ENCODE measurements at regions of chr3 and their contacts with region 1.

Region 1: GRCh38 chr3:43296565-43296964 is 10.2 kb downstream of the SNRK start:
- DNase-seq: peak; percentile 22 to 92 (median 68)
- ATAC-seq: peak; percentile 88
- H3K4me3 ChIP-seq: peak overlapping the region; percentile 30 to 45
- H3K4me3 Mint-ChIP-seq: peak overlapping the region; percentile 87
- H3K27ac ChIP-seq: peak overlapping the region; percentile 57 to 87
- H3K27ac Mint-ChIP-seq: peak overlapping the region; percentile 96
- H3K4me1 ChIP-seq: peaks cover 89% of the 10 kb centered on the region
- H3K4me1 Mint-ChIP-seq: peaks cover 85% of the 10 kb centered on the region
- H3K27me3 ChIP-seq: no peaks in the 10 kb centered on the region
- H3K27me3 Mint-ChIP-seq: no peaks in the 10 kb centered on the region
- CTCF ChIP-seq: no peak

Region 2: DNA sequence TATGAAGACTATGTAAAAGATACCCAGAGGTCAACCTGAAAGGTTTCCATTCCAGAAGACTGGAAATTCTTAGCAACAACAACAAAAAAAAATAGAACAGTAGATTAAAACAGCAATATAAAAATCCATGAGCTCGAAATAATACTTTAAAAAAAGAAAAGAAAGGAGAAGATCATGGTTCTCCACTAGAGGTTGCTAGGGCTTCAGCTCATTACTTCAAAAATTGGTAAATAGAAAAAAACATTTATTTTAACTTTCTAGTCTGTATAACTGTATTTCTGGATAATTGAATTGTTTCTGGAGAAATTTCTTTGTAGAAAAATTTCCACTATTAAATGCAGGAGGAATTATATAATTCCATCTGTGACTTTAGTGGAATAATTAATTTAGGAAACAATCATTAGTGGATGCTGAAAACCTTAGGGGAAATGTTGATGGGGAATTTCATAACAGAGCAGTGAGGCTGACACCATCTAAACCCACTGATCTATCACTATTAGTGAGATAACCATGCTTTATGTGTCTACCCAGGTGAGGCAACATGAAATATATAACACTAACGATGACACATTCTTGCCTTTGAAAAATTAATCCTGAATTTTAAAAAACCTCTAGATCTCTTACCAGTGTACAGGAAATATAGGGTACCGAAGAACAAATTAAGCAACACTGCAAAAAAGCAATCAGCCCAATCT is 72.7 kb before region 1 on chr3:
- CTCF ChIA-PET with region 1: interaction called, 12 read pairs
- POLR2A ChIA-PET with region 1: interaction called, 4 read pairs
- intact Hi-C with region 1: no loop called
- DNase-seq: peak in 2 of 9 experiments; percentile 50 to 58
- ATAC-seq: peak; percentile 30
- H3K4me3 ChIP-seq: no peak overlapping the region
- H3K4me3 Mint-ChIP-seq: no peak overlapping the region
- H3K27ac ChIP-seq: no peak overlapping the region
- H3K27ac Mint-ChIP-seq: peak overlapping the region; percentile 81
- H3K4me1 ChIP-seq: peaks cover 58% of the 10 kb centered on the region
- H3K4me1 Mint-ChIP-seq: peaks cover 64% of the 10 kb centered on the region
- H3K27me3 ChIP-seq: no peaks in the 10 kb centered on the region
- H3K27me3 Mint-ChIP-seq: no peaks in the 10 kb centered on the region
- CTCF ChIP-seq: peak; percentile 78

Region 3: GRCh38 chr3:43260412-43260811 is 36.2 kb before region 1 on chr3:
- CTCF ChIA-PET with region 1: no interaction called
- POLR2A ChIA-PET with region 1: no interaction called
- intact Hi-C with region 1: no loop called
- DNase-seq: no peak
- ATAC-seq: no peak
- H3K4me3 ChIP-seq: no peak overlapping the region
- H3K4me3 Mint-ChIP-seq: no peak overlapping the region
- H3K27ac ChIP-seq: no peak overlapping the region
- H3K27ac Mint-ChIP-seq: no peak overlapping the region
- H3K4me1 ChIP-seq: peaks cover 6% of the 10 kb centered on the region
- H3K4me1 Mint-ChIP-seq: peaks cover 27% of the 10 kb centered on the region
- H3K27me3 ChIP-seq: no peaks in the 10 kb centered on the region
- H3K27me3 Mint-ChIP-seq: no peaks in the 10 kb centered on the region
- CTCF ChIP-seq: no peak

Region 4: GRCh38 chr3:43286115-43286840 is 10.3 kb before region 1 on chr3 and contains the start of gene SNRK:
- CTCF ChIA-PET with region 1: interaction called, 6 read pairs
- POLR2A ChIA-PET with region 1: interaction called, 48 read pairs
- intact Hi-C with region 1: loop called (anchors 1 kb)
- DNase-seq: peak; percentile 86 to 99 (median 93)
- ATAC-seq: peak; percentile 84
- H3K4me3 ChIP-seq: peak within 1 kb of the TSS; percentile 76 to 82
- H3K4me3 Mint-ChIP-seq: peak within 1 kb of the TSS; percentile 99
- H3K27ac ChIP-seq: peak within 1 kb of the TSS; percentile 87 to 91
- H3K27ac Mint-ChIP-seq: peak within 1 kb of the TSS; percentile 100
- H3K4me1 ChIP-seq: peaks cover 27% of the 10 kb centered on the region
- H3K4me1 Mint-ChIP-seq: peaks cover 31% of the 10 kb centered on the region
- H3K27me3 ChIP-seq: no peaks in the 10 kb centered on the region
- H3K27me3 Mint-ChIP-seq: no peaks in the 10 kb centered on the region
- CTCF ChIP-seq: peak; percentile 48
- total RNA-seq, gene SNRK: 280 to 281 TPM

Region 5: GRCh38 chr3:43309372-43310305 is 13.1 kb after region 1 on chr3:
- CTCF ChIA-PET with region 1: interaction called, 3 read pairs
- POLR2A ChIA-PET with region 1: interaction called, 13 read pairs
- intact Hi-C with region 1: loop called (anchors 1 to 2 kb)
- DNase-seq: no peak
- ATAC-seq: no peak
- H3K4me3 ChIP-seq: no peak overlapping the region
- H3K4me3 Mint-ChIP-seq: peak overlapping the region; percentile 38
- H3K27ac ChIP-seq: no peak overlapping the region
- H3K27ac Mint-ChIP-seq: peak overlapping the region; percentile 88
- H3K4me1 ChIP-seq: peaks cover 76% of the 10 kb centered on the region
- H3K4me1 Mint-ChIP-seq: peaks cover 86% of the 10 kb centered on the region
- H3K27me3 ChIP-seq: no peaks in the 10 kb centered on the region
- H3K27me3 Mint-ChIP-seq: no peaks in the 10 kb centered on the region
- CTCF ChIP-seq: no peak

Region 6: DNA sequence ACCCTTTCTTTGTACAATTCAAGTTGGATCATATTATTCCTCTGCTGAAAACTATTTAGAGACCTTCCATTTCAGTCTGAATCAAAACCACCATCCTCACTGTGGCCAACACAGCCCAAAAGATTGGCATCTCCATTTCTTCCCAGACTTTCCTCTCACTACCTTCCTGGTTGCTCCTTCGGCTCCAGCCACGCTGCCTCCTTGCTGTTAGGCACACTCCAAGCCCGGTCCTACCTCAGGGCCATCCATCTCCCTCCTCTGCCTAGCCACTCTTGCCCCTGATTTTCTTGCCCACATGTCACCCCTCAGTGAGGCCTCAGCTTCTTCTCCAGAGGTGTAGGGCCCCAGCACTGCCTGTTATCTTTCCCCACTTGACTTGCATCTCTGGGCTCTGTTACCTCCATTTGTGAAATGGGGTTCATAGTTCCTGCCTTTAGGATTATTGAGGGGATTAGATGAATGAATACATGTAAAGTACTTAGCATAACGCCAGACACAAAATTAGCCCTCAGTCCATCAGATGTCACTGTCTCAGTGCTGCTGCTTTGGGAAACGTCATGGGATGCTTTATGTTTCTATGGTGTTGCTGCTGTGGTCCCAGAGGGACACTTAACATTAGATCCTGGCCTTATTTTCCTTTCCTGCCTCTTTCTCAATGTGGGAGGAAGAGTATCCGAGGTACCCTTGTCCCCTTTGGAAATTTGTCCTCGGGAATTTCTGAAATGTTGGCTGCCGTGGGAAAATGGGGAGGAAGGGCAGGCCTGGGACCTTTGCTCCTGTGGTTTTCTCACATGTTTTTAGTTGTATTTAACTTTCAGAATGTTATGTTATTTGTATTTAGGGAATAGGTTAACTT is 21.1 kb after region 1 on chr3:
- CTCF ChIA-PET with region 1: interaction called, 3 read pairs
- POLR2A ChIA-PET with region 1: interaction called, 4 read pairs
- intact Hi-C with region 1: loop called (anchors 2 kb)
- DNase-seq: no peak
- ATAC-seq: peak; percentile 39
- H3K4me3 ChIP-seq: no peak overlapping the region
- H3K4me3 Mint-ChIP-seq: peak overlapping the region; percentile 60
- H3K27ac ChIP-seq: peak overlapping the region in 1 of 2 experiments; percentile 10
- H3K27ac Mint-ChIP-seq: peak overlapping the region; percentile 90
- H3K4me1 ChIP-seq: peaks cover 88% of the 10 kb centered on the region
- H3K4me1 Mint-ChIP-seq: peaks cover 89% of the 10 kb centered on the region
- H3K27me3 ChIP-seq: no peaks in the 10 kb centered on the region
- H3K27me3 Mint-ChIP-seq: no peaks in the 10 kb centered on the region
- CTCF ChIP-seq: no peak

Region 7: DNA sequence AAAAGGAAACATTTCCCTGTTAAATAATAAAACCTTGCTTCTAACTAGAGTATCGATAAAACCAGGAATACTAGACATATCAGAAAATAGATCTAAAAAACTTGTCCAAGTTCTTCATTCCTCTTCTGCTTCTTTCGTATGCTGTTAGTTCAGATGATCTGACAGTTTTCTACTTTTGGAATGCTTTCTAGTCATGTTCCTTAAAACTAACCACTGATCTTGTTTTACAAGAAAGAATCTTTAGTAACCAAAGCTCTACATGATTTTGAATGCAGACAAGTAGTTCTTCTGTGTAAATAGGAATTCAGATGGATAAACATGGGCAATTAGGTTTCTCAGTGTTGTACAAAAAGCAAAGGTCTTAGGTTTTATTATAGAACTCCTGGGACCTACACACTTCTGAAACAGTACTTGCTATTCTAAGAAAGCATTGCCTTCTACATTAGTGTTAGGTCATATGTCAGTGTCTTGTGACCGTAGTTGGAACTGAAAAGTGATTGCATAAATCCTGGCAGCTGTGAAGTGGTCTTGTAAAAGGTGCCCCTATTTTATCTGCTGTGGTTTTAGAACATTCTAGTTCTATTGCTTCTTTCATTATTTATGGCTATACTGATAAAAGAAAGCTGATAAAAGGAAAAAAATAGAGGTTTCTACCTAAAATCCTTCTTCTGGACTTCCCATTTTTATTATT is 30.5 kb after region 1 on chr3:
- CTCF ChIA-PET with region 1: interaction called, 3 read pairs
- POLR2A ChIA-PET with region 1: interaction called, 15 read pairs
- intact Hi-C with region 1: no loop called
- DNase-seq: peak in 1 of 9 experiments; percentile 51
- ATAC-seq: peak; percentile 73
- H3K4me3 ChIP-seq: no peak overlapping the region
- H3K4me3 Mint-ChIP-seq: peak overlapping the region; percentile 54
- H3K27ac ChIP-seq: peak overlapping the region; percentile 1 to 31
- H3K27ac Mint-ChIP-seq: peak overlapping the region; percentile 88
- H3K4me1 ChIP-seq: peaks cover 75% of the 10 kb centered on the region
- H3K4me1 Mint-ChIP-seq: peaks cover 88% of the 10 kb centered on the region
- H3K27me3 ChIP-seq: no peaks in the 10 kb centered on the region
- H3K27me3 Mint-ChIP-seq: no peaks in the 10 kb centered on the region
- CTCF ChIP-seq: no peak

Region 8: GRCh38 chr3:43503067-43503728 is 206.6 kb after region 1 on chr3:
- CTCF ChIA-PET with region 1: interaction called, 22 read pairs
- POLR2A ChIA-PET with region 1: interaction called, 5 read pairs
- intact Hi-C with region 1: loop called in 1 of 2 experiments (anchors 5 kb)
- DNase-seq: peak in 2 of 9 experiments; percentile 57 to 72
- ATAC-seq: peak; percentile 60
- H3K4me3 ChIP-seq: no peak overlapping the region
- H3K4me3 Mint-ChIP-seq: no peak overlapping the region
- H3K27ac ChIP-seq: no peak overlapping the region
- H3K27ac Mint-ChIP-seq: no peak overlapping the region
- H3K4me1 ChIP-seq: peaks cover 42% of the 10 kb centered on the region
- H3K4me1 Mint-ChIP-seq: peaks cover 54% of the 10 kb centered on the region
- H3K27me3 ChIP-seq: no peaks in the 10 kb centered on the region
- H3K27me3 Mint-ChIP-seq: no peaks in the 10 kb centered on the region
- CTCF ChIP-seq: peak; percentile 65